Activated CD4-positive, alpha-beta memory T cell treated with anti-CD3 and anti-CD28 coated beads for 36 hours (primary cell): ENCODE measurements at regions of chr19 and their contacts with region 1.

Region 1: GRCh38 chr19:46746281-46747013 is at the start of gene STRN4:
- DNase-seq: peak; percentile 66
- H3K4me3 Mint-ChIP-seq: peak within 1 kb of the TSS; percentile 94
- H3K27ac Mint-ChIP-seq: peak within 1 kb of the TSS; percentile 83
- H3K4me1 Mint-ChIP-seq: peaks cover 49% of the 10 kb centered on the region
- H3K27me3 Mint-ChIP-seq: no peaks in the 10 kb centered on the region
- total RNA-seq, gene STRN4: 52.6 to 59.3 TPM

Region 2: DNA sequence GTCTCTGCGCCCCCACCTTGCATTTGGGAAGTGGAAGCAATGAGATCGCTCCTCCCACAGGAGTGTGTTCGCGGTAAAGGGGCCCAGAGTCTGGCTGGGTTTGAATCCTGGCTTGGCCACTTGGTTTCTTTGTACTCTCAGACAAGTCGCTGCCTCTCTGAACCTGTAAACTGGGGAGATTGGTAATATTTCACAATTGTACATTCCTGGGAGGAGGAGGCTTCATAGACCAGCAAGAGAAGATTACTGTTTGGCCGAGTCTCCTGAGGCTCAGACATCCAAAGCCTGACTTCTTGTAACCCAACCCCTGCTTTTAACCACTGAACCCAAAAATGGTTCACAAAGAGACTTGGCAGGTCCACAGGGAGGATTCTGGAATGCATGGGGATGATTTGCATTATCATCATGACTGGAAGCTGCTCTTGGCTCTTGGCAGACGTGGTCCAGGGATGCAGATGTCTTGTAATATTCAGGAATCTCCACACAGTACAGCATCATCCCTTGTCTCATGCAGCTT is 13.4 kb after region 1 on chr19:
- CTCF ChIA-PET with region 1: interaction called, 11 read pairs
- POLR2A ChIA-PET with region 1: no interaction called
- intact Hi-C with region 1: no loop called
- DNase-seq: no peak
- H3K4me3 Mint-ChIP-seq: no peak overlapping the region
- H3K27ac Mint-ChIP-seq: no peak overlapping the region
- H3K4me1 Mint-ChIP-seq: no peaks in the 10 kb centered on the region
- H3K27me3 Mint-ChIP-seq: no peaks in the 10 kb centered on the region

Region 3: GRCh38 chr19:46850228-46851203 is 104.1 kb after region 1 on chr19 and contains the start of gene AP2S1:
- CTCF ChIA-PET with region 1: interaction called, 4 read pairs
- POLR2A ChIA-PET with region 1: no interaction called
- intact Hi-C with region 1: loop called (anchors 5 kb)
- DNase-seq: peak; percentile 96
- H3K4me3 Mint-ChIP-seq: peak within 1 kb of the TSS; percentile 95
- H3K27ac Mint-ChIP-seq: peak within 1 kb of the TSS; percentile 80
- H3K4me1 Mint-ChIP-seq: peaks cover 19% of the 10 kb centered on the region
- H3K27me3 Mint-ChIP-seq: no peaks in the 10 kb centered on the region
- total RNA-seq, gene AP2S1: 108 to 117 TPM

Region 4: DNA sequence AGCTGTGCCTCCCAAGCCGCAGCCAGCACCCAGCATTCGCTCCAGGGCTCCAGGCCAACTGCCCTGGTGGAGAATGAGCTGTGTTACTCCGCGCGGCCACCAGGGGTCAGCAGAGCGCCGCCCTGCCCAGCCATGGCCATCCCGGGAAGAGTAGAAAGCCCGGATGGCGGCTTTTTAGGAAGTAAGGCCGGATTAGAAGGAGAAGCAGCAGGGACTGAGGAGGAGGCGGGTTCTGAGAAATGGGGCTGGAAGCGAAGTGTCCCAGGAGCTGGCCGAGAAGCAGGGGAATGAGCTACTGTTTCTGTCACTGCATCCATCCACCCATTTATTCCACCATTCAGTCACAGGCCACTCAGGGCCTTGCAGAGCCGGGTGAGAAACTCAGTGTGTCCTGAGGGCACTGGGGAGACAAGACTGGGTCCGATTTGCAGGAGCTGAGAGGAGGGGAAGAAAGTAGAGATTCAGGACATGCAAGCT is 266.6 kb after region 1 on chr19:
- CTCF ChIA-PET with region 1: no interaction called
- POLR2A ChIA-PET with region 1: no interaction called
- intact Hi-C with region 1: no loop called
- DNase-seq: peak; percentile 77
- H3K4me3 Mint-ChIP-seq: no peak overlapping the region
- H3K27ac Mint-ChIP-seq: no peak overlapping the region
- H3K4me1 Mint-ChIP-seq: peaks cover 10% of the 10 kb centered on the region
- H3K27me3 Mint-ChIP-seq: peaks cover 4% of the 10 kb centered on the region